Thyroid gland (tissue), 4 donors: ENCODE measurements at regions of chr19 and their contacts with region 1.

Region 1: DNA sequence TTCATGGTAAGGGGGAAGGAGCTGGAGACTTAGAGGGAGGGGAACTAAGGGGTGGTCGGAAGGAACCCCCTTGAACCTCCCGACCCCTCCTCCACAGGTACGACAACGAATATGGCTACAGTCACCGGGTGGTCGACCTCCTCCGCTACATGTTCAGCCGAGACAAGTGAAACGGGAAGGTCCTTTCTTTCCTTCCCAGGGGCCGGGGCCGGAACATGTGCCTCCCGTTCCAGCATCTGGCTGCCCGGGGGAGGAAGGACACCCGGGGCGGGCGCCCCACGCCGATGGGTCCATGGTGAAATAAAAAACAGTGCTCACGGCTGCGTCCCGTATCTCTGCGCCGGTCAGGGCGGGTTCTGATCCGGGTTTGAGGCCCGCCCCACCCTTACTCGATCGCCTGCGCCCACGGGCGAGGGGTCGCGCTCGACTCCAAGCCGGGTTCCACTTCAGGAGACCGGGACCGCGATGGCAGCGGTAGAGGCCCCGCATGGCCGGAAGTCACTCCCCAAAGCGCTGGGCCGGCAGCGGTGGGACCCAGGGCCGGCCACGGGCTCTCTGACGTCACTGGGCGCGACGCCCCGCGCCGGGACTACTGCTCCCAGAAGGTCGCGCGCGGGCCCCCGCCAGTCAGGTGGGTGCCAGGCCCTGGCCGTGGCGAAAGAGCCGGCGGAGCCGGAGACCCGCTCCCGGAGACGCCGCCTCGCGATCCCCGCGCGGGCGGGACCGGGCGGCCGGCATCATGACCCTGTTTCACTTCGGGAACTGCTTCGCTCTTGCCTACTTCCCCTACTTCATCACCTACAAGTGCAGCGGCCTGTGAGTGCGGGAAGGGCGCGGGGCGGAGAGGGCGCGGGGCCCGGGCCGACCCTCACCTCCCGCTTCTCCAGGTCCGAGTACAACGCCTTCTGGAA is at the start of gene TMEM147:
- DNase-seq: peak; percentile 95
- H3K4me3 ChIP-seq: peak within 1 kb of the TSS; percentile 75 to 88 (median 76)
- H3K27ac ChIP-seq: peak within 1 kb of the TSS; percentile 34 to 80 (median 75)
- H3K4me1 ChIP-seq: peaks cover 24 to 42% of the 10 kb centered on the region in 2 donors
- H3K27me3 ChIP-seq: no peaks in the 10 kb centered on the region
- CTCF ChIP-seq: no peak
- POLR2A ChIP-seq: peak in 1 of 2 donors; percentile 78
- total RNA-seq, gene TMEM147: 186 to 202 (median 188) TPM

Region 2: GRCh38 chr19:35592226-35592625 is 47.0 kb after region 1 on chr19:
- intact Hi-C with region 1: loop called (anchors 5 kb)
- DNase-seq: peak; percentile 64 to 66
- H3K4me3 ChIP-seq: no peak overlapping the region
- H3K27ac ChIP-seq: no peak overlapping the region
- H3K4me1 ChIP-seq: peaks cover 3 to 14% of the 10 kb centered on the region in 2 donors
- H3K27me3 ChIP-seq: no peaks in the 10 kb centered on the region
- CTCF ChIP-seq: peak; percentile 19 to 86 (median 74)
- POLR2A ChIP-seq: no peak

Region 3: GRCh38 chr19:35716801-35717666 is 171.8 kb after region 1 on chr19:
- intact Hi-C with region 1: loop called (anchors 5 kb)
- DNase-seq: peak; percentile 97
- H3K4me3 ChIP-seq: peak overlapping the region; percentile 43 to 88 (median 49)
- H3K27ac ChIP-seq: peak overlapping the region; percentile 72 to 90 (median 78)
- H3K4me1 ChIP-seq: peaks cover 18 to 23% of the 10 kb centered on the region in 2 donors
- H3K27me3 ChIP-seq: no peaks in the 10 kb centered on the region
- CTCF ChIP-seq: peak; percentile 50 to 97 (median 92)
- POLR2A ChIP-seq: peak in 1 of 2 donors; percentile 26